ENCODE measurements at regions of chr6 and their contacts with region 1.

Region 1: GRCh38 chr6:16712931-16713484 is 48.3 kb downstream of the ATXN1 start:
- DNase-seq: peak; percentile 95
- H3K4me3 Mint-ChIP-seq: peak overlapping the region; percentile 63
- H3K27ac Mint-ChIP-seq: peak overlapping the region; percentile 96
- H3K4me1 Mint-ChIP-seq: peaks cover 28% of the 10 kb centered on the region
- H3K27me3 Mint-ChIP-seq: no peaks in the 10 kb centered on the region
- CTCF ChIP-seq: no peak

Region 2: DNA sequence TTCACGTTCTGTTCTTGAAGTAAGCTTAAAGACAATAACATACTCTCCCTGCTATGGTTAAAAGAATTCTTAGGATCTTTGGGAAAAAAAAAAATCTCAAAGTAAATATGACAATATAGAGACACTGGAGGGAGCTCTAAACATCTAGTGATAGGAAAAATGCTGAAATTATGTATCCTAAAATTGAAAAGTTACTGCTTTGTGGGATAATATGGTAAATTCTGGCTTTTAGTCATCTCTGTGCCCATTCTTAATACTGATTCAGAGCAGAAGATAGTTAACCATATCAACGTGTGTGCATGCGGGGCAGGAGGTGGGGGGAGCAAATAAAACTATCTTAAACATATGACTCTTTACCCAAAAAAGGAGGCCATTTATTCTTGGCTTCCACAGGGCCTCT is 309.2 kb before region 1 on chr6:
- CTCF ChIA-PET with region 1: interaction called, 6 read pairs
- POLR2A ChIA-PET with region 1: interaction called, 7 read pairs
- intact Hi-C with region 1: loop called (anchors 1 kb)
- DNase-seq: no peak
- H3K4me3 Mint-ChIP-seq: no peak overlapping the region
- H3K27ac Mint-ChIP-seq: no peak overlapping the region
- H3K4me1 Mint-ChIP-seq: no peaks in the 10 kb centered on the region
- H3K27me3 Mint-ChIP-seq: no peaks in the 10 kb centered on the region
- CTCF ChIP-seq: peak; percentile 23

Region 3: GRCh38 chr6:16514249-16514648 is 198.8 kb before region 1 on chr6:
- CTCF ChIA-PET with region 1: interaction called, 12 read pairs
- POLR2A ChIA-PET with region 1: interaction called, 6 read pairs
- intact Hi-C with region 1: loop called (anchors 1 kb)
- DNase-seq: peak; percentile 29
- H3K4me3 Mint-ChIP-seq: no peak overlapping the region
- H3K27ac Mint-ChIP-seq: no peak overlapping the region
- H3K4me1 Mint-ChIP-seq: peaks cover 10% of the 10 kb centered on the region
- H3K27me3 Mint-ChIP-seq: no peaks in the 10 kb centered on the region
- CTCF ChIP-seq: peak; percentile 20

Region 4: GRCh38 chr6:16635810-16636602 is 77.0 kb before region 1 on chr6:
- CTCF ChIA-PET with region 1: no interaction called
- POLR2A ChIA-PET with region 1: interaction called, 3 read pairs
- intact Hi-C with region 1: loop called (anchors 5 kb)
- DNase-seq: peak; percentile 72
- H3K4me3 Mint-ChIP-seq: no peak overlapping the region
- H3K27ac Mint-ChIP-seq: peak overlapping the region; percentile 65
- H3K4me1 Mint-ChIP-seq: peaks cover 11% of the 10 kb centered on the region
- H3K27me3 Mint-ChIP-seq: no peaks in the 10 kb centered on the region
- CTCF ChIP-seq: no peak